Right ventricle myocardium inferior (tissue), 1 donor: ENCODE measurements at regions of chr5 and their contacts with region 1.

Region 1: DNA sequence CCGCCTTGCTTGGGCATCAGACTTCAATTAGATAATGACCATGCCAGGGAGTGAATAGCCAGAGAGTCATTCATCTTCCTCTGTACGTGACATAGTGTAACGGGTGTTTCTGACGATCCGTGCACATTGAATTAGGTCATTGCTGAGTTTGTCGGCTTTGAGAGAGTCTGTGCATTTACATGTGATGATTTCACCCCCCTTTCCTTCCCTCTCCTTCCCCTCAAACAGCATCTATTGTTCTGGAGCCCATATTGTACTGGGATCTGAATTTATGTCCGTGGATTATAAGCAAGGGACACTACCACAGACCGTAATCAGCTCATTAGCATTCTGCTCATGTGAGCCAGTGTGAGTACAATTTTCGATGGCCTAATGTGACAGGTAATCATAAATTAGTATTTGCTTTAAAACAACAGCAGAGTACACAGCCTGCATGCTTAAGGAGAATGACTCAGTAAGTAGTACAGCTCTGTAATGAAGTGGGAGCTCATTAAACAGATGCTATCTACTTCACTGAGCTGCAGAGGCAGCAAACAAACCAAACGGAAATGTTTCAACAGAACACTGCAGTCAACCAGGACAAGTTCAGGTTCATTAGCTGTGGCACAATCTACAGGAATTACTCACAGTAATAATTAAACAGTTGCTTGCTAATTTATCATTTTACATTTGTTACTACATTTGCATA is 302.1 kb downstream of the CSNK1G3 start:
- DNase-seq: no peak
- ATAC-seq: peak; percentile 46

Region 2: GRCh38 chr5:123700398-123701287 is 113.4 kb before region 1 on chr5:
- intact Hi-C with region 1: loop called (anchors 5 kb)
- DNase-seq: no peak
- ATAC-seq: peak; percentile 38

Region 3: DNA sequence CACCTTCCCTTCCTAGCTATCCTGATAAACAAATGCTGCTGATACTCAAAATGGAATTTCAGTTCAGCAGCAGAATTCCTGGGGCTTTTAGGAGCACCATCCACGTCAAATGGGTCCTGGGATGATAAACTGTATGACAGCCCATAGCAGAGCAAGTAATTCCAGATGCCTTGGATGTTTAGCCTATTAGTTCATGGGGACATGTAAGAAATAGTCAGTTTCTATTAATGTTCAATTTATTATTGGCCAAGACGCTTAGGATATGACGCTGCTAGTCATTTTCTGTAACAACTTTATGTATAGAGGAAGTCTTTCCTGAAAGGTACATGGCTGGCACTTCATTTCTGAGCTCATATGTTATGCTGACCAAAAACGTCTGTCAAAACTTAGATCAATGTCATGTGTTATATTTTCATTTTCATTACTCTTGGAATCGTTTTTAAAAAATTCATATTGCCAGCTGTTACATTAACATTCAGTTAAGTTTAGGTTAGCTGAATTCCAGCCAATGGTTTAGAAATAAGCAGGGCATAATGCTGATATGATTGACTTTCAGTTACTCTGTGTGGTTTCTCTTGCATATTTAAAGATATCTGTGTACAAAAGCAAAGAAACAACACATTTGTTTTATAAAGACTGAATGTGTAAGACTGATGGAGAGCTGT is 58.3 kb before region 1 on chr5:
- intact Hi-C with region 1: loop called (anchors 2 kb)
- DNase-seq: no peak
- ATAC-seq: no peak

Region 4: DNA sequence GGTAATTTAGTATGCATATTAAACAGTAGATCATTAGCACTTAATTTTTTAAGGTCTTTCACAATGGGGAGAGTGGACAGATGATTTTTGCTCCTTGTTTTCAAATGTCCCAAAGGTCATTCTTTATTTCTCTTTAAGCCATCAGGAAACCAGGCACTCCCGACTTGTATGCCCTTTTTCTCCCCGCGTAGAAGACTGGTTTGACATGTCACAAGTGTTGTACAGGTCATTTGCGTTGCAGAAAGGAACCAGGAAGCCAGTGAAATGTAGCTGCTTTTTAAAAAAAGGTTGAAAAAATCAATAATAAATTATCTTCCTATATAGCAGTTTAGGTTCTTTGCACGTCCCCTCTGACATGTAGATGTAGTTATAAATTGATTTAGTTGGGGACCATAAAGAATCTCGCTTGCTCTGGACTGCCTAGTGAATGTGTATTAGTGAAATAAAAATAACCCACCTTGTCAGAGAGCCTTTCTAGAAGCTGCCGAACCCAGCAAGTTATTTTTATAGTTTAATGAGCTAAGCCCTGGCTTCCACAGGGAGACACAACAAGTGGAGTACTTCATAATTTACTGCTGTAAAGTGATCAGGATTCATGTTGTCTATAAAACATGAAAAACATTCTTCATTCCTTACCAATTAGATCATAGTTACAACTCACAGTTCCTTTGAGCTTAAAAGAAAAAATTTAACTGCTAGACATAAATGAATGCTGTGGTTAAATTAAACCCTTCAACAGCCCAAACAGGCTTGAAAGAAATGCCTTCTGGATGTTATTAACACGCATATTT is 102.4 kb after region 1 on chr5:
- intact Hi-C with region 1: loop called (anchors 10 kb)
- DNase-seq: no peak
- ATAC-seq: peak; percentile 59

Region 5: DNA sequence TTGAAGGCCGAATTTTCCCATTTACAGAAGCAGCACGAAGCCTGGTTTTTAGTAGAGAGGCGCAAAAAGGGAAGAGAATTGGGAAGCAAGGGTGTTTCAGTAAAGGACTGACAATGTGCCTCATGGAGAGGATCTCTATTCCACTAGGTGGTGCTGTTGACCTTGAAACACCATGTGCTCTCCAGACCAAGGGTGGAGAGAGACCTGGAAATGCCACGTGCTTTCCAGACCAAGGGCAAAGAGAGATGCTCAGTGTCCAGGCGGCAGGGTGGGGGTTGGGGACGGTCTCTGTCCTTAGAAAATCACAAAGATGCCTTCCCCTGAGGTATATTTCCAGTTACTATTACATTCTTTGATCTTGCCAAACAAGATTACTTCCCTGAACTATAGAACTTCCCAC is 123.1 kb after region 1 on chr5:
- intact Hi-C with region 1: no loop called
- DNase-seq: no peak
- ATAC-seq: no peak

Region 6: GRCh38 chr5:124176691-124177090 is 362.6 kb after region 1 on chr5:
- intact Hi-C with region 1: loop called (anchors 10 kb)
- DNase-seq: no peak
- ATAC-seq: peak; percentile 96

Region 7: GRCh38 chr5:124193371-124193789 is 379.3 kb after region 1 on chr5:
- intact Hi-C with region 1: no loop called
- DNase-seq: no peak
- ATAC-seq: peak; percentile 81

Region 8: DNA sequence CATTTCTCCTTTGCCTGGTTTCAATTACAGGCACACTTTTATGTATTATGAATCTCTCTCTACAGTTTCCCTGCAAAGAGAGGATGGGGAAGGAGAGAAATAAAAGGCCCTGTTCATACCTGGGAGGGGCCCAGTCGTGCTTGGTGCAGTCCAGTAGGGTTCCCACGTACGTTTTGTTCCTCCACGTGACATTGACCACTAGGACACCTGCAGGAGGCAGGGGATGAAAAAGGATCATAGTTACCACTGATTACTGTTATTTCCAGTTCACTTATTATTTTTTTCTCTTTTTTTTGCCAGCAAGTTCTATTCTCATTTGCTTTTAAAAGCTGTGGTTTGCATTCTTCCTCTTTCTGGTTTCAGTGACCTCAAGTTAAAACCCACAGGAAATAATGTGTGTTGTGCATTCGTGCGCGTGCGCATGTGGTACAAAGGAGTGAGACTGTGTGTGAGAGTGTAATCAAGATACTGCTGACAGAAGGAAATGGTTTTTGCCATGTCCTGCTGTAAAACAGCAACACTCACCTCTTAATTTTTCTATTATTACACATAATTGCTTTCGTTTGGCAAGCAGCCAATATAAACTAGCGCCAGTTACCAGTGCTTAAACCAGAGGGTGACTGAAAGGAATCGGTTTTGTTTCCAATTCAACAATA is 835.5 kb after region 1 on chr5:
- intact Hi-C with region 1: loop called (anchors 10 kb)
- DNase-seq: peak; percentile 93
- ATAC-seq: peak; percentile 43